ENCODE measurements at regions of chr2 and their contacts with region 1.

Region 1: GRCh38 chr2:212912445-212913103 is 238.8 kb downstream of the IKZF2 start:
- DNase-seq: peak; percentile 92
- ATAC-seq: peak; percentile 83
- H3K4me3 ChIP-seq: peak overlapping the region; percentile 54
- H3K27ac ChIP-seq: peak overlapping the region; percentile 94
- H3K4me1 ChIP-seq: peaks cover 55% of the 10 kb centered on the region
- H3K27me3 ChIP-seq: no peaks in the 10 kb centered on the region
- CTCF ChIP-seq: no peak

Region 2: GRCh38 chr2:211957799-211958385 is 954.7 kb before region 1 on chr2:
- CTCF ChIA-PET with region 1: no interaction called
- POLR2A ChIA-PET with region 1: no interaction called
- intact Hi-C with region 1: no loop called
- DNase-seq: no peak
- ATAC-seq: peak; percentile 20
- H3K4me3 ChIP-seq: no peak overlapping the region
- H3K27ac ChIP-seq: no peak overlapping the region
- H3K4me1 ChIP-seq: peaks cover 4% of the 10 kb centered on the region; the same call in 1 of the 2 replicates
- H3K27me3 ChIP-seq: no peaks in the 10 kb centered on the region
- CTCF ChIP-seq: no peak

Region 3: DNA sequence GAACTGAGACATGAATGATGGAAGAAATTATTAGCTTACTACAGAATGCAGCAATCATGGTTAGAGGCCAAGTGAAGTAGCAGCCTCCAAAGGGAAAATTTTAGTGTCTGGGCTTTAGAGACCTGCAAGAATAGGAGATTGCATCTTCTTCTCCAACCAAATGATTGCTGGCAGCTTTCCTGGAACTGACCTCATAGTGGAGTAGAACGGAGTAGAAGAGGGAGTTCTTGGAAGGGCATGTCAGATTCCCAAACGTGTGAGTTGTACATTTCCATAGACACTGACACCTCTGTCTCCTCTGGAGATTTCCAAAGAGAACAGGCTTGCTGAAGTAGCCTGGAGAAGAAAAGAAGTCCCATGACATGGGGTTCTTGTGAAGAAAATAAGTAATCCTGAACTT is 204.2 kb before region 1 on chr2:
- CTCF ChIA-PET with region 1: no interaction called
- POLR2A ChIA-PET with region 1: no interaction called
- intact Hi-C with region 1: loop called (anchors 5 kb)
- DNase-seq: no peak
- ATAC-seq: no peak
- H3K4me3 ChIP-seq: no peak overlapping the region
- H3K27ac ChIP-seq: no peak overlapping the region
- H3K4me1 ChIP-seq: peaks cover 28% of the 10 kb centered on the region
- H3K27me3 ChIP-seq: no peaks in the 10 kb centered on the region
- CTCF ChIP-seq: no peak

Region 4: DNA sequence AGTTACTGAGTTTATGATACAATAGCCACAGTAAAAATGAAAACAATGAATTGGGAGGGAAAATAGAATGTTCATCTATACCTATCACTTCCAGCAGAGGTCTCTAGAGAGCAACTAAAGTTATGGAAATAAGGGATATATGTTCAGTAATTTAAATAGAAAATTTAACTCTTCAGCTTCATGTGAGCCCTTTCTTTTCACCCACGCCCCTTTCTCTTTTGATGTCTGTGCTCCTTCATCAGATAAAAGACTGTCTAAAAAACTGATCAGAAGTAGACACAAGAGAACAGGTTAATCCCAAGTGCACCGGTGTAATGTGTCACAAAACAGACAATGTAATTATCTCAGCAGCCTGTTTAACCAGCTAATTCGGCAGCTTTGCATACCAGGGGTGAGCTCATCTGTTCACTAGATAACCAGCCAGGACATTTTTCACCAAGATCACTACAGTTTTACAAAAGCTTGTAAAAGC is 135.5 kb before region 1 on chr2:
- CTCF ChIA-PET with region 1: no interaction called
- POLR2A ChIA-PET with region 1: no interaction called
- intact Hi-C with region 1: loop called (anchors 2 kb)
- DNase-seq: peak; percentile 77
- ATAC-seq: peak; percentile 63
- H3K4me3 ChIP-seq: peak overlapping the region; percentile 45
- H3K27ac ChIP-seq: no peak overlapping the region
- H3K4me1 ChIP-seq: peaks cover 11% of the 10 kb centered on the region; the same call in 1 of the 2 replicates
- H3K27me3 ChIP-seq: no peaks in the 10 kb centered on the region
- CTCF ChIP-seq: peak; percentile 79

Region 5: DNA sequence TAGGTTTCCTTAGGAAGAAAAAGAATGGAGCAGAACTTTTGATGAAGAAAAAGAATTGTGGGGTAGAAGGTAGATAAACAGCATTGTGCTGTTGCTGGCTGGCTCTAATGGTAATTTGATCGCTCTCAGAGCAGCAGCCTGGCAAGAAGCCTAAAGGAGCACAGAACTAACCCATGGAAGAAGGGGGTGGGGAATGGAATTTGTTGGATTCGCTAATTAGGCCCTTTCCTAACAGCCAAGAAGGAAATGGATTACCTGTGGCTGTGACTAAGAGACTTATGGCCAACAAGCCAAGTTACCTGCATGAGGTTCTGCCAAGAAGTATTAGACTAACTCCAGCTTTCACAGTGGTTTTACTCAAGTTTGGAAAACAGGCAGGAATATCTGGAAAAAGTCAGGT is 28.2 kb after region 1 on chr2:
- CTCF ChIA-PET with region 1: no interaction called
- POLR2A ChIA-PET with region 1: interaction called, 3 read pairs
- intact Hi-C with region 1: loop called (anchors 1 kb)
- DNase-seq: peak; percentile 75
- ATAC-seq: peak; percentile 60
- H3K4me3 ChIP-seq: peak overlapping the region; percentile 9; the same call in 1 of the 2 replicates
- H3K27ac ChIP-seq: peak overlapping the region; percentile 71
- H3K4me1 ChIP-seq: peaks cover 26% of the 10 kb centered on the region
- H3K27me3 ChIP-seq: no peaks in the 10 kb centered on the region
- CTCF ChIP-seq: no peak

Region 6: DNA sequence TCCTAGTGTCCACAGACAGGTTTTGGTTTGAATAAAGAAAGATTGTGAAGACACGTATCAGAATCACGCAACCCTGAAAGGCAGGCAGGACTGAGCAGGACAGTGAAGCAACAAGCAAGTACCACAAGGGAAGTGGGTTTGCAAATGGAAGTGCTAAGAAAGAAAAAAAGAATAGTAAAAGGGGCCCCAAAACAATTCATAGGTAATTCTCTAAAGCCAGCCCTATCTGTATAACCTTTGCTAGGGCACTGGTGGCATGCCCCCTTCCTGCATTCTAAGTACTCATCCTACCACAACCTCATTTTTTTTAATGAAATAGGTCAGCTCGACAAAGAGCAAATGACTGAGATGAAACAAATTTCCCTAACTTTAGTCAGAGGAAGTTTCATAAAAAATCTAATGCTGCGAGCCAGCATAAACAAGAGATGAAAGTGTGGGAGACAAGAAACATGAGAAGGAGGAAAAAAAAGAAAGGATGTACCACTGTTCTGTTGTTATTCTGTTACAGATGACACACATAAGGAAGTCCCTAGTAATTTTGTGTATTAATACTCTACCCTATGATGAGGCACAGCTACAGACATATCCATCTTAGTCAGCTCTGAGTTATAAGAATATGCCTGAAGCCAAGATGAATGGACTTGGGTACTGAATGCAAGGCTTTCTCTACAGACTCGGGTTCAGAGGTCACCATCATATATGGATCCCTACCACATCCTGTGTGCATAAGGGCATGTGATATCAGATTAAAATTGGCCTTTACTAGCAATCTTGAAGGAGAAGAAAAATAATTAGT is 206.7 kb after region 1 on chr2:
- CTCF ChIA-PET with region 1: no interaction called
- POLR2A ChIA-PET with region 1: no interaction called
- intact Hi-C with region 1: loop called (anchors 1 kb)
- DNase-seq: peak; percentile 76
- ATAC-seq: peak; percentile 93
- H3K4me3 ChIP-seq: no peak overlapping the region
- H3K27ac ChIP-seq: peak overlapping the region; percentile 73
- H3K4me1 ChIP-seq: peaks cover 33% of the 10 kb centered on the region
- H3K27me3 ChIP-seq: no peaks in the 10 kb centered on the region
- CTCF ChIP-seq: no peak

Region 7: DNA sequence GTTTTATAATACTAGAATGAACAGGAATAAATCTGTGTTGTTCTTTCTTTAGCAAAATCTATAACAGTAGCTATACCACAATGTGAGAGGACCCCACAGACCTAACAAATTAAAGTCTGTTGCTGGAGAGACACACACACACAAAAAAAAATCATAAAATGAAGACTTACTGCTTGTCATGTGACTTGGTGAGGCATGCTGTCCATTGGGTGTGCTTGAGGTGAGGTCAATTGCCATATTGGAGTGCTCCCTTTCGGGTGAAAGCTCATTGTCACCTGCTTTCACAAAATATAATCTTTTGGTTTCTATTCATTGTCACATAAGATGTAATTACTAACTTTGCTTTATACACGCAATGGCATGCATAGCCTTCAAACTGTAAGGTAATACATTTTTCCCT is 235.0 kb after region 1 on chr2:
- CTCF ChIA-PET with region 1: no interaction called
- POLR2A ChIA-PET with region 1: no interaction called
- intact Hi-C with region 1: no loop called
- DNase-seq: no peak
- ATAC-seq: no peak
- H3K4me3 ChIP-seq: no peak overlapping the region
- H3K27ac ChIP-seq: no peak overlapping the region
- H3K4me1 ChIP-seq: peaks cover 15% of the 10 kb centered on the region
- H3K27me3 ChIP-seq: no peaks in the 10 kb centered on the region
- CTCF ChIP-seq: no peak

Measured in PC-3 (cell line).